Activated CD4-positive, alpha-beta T cell treated with anti-CD3 and anti-CD28 coated beads for 36 hours (primary cell): ENCODE measurements at regions of chr17 and their contacts with region 1.

Region 1: DNA sequence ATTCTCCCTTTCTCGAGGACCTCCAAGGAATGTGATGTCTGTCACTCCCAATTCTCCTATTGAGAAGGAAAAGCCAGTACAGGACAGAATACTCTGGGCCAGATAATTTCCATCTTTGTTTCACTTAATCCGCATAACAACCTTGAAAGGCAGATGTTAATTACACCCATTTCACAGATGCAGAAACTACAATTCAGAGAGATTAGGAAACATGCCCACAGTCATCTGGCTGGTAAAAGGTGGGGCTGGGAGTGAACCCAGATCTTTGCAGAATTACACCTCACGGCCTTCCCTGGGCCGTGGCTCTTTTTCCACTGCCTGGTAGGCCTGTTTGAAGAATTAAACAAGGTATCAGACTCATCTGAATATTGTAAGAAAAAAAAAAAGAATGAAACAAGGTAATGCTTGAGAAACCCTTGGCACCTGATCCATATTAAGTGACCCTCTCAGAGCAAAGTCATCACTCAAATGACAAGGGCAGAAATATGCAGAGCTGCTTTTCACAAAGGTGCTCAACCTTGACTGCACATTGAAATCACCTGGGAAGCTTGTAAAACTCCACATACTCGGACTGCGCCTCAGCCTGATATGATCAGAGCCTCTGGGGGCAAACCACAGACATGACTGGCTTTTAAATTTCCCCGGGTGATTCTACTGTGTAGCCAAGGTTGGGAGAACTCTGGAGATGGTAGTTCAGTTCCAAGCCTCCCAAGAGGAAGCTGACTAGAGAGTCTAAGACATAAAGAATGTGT is 16.6 kb upstream of the G6PC1 start:
- DNase-seq: no peak
- ATAC-seq: no peak
- H3K4me3 Mint-ChIP-seq: no peak overlapping the region
- H3K27ac Mint-ChIP-seq: no peak overlapping the region
- H3K4me1 Mint-ChIP-seq: no peaks in the 10 kb centered on the region
- H3K27me3 Mint-ChIP-seq: peaks cover 10% of the 10 kb centered on the region

Region 2: GRCh38 chr17:42868338-42868737 is 15.6 kb before region 1 on chr17:
- CTCF ChIA-PET with region 1: no interaction called
- POLR2A ChIA-PET with region 1: no interaction called
- intact Hi-C with region 1: no loop called
- DNase-seq: no peak
- ATAC-seq: no peak
- H3K4me3 Mint-ChIP-seq: no peak overlapping the region
- H3K27ac Mint-ChIP-seq: no peak overlapping the region
- H3K4me1 Mint-ChIP-seq: no peaks in the 10 kb centered on the region
- H3K27me3 Mint-ChIP-seq: peaks cover 5% of the 10 kb centered on the region

Region 3: GRCh38 chr17:42901535-42902229 is 17.7 kb after region 1 on chr17:
- CTCF ChIA-PET with region 1: no interaction called
- POLR2A ChIA-PET with region 1: no interaction called
- intact Hi-C with region 1: loop called in 1 of 2 experiments (anchors 2 kb)
- DNase-seq: no peak
- ATAC-seq: no peak
- H3K4me3 Mint-ChIP-seq: no peak overlapping the region
- H3K27ac Mint-ChIP-seq: no peak overlapping the region
- H3K4me1 Mint-ChIP-seq: no peaks in the 10 kb centered on the region
- H3K27me3 Mint-ChIP-seq: peaks cover 4% of the 10 kb centered on the region